Left lung (tissue), 14 donors: ENCODE measurements at regions of chr11 and their contacts with region 1.

Region 1: GRCh38 chr11:662689-663274 is 25.7 kb downstream of the DRD4 start:
- DNase-seq: peak in 2 of 4 donors; percentile 58 to 88
- ATAC-seq: peak; percentile 89
- H3K4me3 ChIP-seq: no peak overlapping the region
- H3K27ac ChIP-seq: no peak overlapping the region
- H3K4me1 ChIP-seq: peaks cover 0 to 8% of the 10 kb centered on the region in 2 donors
- H3K27me3 ChIP-seq: no peaks in the 10 kb centered on the region
- CTCF ChIP-seq: peak; percentile 48 to 81

Region 2: GRCh38 chr11:727859-728748 is 65.3 kb after region 1 on chr11:
- intact Hi-C with region 1: loop called in 1 of 2 experiments (anchors 5 kb)
- DNase-seq: peak in 3 of 4 donors; percentile 80 to 96 (median 84)
- ATAC-seq: peak; percentile 95
- H3K4me3 ChIP-seq: no peak overlapping the region
- H3K27ac ChIP-seq: peak overlapping the region in 1 of 2 donors; percentile 61
- H3K4me1 ChIP-seq: peaks cover 3 to 48% of the 10 kb centered on the region in 2 donors
- H3K27me3 ChIP-seq: peaks cover 14 to 74% of the 10 kb centered on the region in 2 donors
- CTCF ChIP-seq: peak; percentile 92 to 98